Activated CD4-positive, alpha-beta T cell treated with anti-CD3 and anti-CD28 coated beads, Interleukin-2, amount 10 ng/mL, durations not matched to agents 24 days and 14 days (primary cell): ENCODE measurements at regions of chr14 and their contacts with region 1.

Region 1: GRCh38 chr14:65102441-65103149 is at the start of gene MAX:
- DNase-seq: peak; percentile 99
- H3K4me3 Mint-ChIP-seq: peak within 1 kb of the TSS; percentile 91
- H3K27ac Mint-ChIP-seq: peak within 1 kb of the TSS; percentile 94
- H3K4me1 Mint-ChIP-seq: peaks cover 36% of the 10 kb centered on the region
- H3K27me3 Mint-ChIP-seq: peaks cover 7% of the 10 kb centered on the region
- total RNA-seq, gene MAX: 122 and 128 TPM in 2 replicates

Region 2: DNA sequence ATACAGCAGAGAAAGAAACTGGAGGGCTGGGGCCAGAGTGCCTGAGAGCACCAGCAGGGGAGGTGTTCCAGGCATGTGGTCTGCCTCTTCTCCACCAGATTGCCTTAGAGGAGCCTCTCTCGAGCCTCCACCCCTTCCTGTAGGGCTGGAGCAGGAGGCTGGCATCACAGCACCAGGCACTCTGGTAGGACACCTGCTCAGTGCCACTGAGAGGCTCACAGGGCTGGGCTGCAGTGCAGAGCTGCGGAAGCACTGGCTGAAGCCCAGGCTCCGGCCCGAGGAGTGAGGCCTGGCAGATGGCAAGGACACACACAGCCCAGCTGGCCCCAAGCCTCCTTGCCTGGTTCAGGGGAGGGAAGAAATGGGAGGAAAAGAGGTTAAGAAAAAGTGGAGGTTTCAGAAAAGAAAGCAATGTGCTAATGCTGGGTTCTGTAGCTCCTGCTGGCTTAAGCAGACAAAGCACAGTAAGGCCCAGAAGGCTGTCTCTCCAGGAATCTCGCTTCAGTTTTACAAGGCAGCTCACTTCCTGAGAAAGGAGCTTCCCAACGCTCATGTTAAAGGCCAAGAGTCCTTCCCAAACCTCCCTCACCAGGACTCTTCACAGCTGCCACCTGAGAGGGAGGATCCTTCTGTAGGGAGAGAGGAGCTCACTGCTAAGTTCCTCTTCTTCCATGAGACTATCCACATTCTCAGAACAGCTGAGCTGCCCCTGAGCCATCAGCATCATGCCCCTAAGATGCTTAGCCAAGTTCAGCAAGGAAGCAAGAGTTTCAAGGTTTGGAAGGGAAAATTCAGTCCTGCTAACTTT is 246.7 kb before region 1 on chr14:
- intact Hi-C with region 1: no loop called
- DNase-seq: no peak
- H3K4me3 Mint-ChIP-seq: no peak overlapping the region
- H3K27ac Mint-ChIP-seq: no peak overlapping the region
- H3K4me1 Mint-ChIP-seq: no peaks in the 10 kb centered on the region
- H3K27me3 Mint-ChIP-seq: peaks cover 29% of the 10 kb centered on the region

Region 3: DNA sequence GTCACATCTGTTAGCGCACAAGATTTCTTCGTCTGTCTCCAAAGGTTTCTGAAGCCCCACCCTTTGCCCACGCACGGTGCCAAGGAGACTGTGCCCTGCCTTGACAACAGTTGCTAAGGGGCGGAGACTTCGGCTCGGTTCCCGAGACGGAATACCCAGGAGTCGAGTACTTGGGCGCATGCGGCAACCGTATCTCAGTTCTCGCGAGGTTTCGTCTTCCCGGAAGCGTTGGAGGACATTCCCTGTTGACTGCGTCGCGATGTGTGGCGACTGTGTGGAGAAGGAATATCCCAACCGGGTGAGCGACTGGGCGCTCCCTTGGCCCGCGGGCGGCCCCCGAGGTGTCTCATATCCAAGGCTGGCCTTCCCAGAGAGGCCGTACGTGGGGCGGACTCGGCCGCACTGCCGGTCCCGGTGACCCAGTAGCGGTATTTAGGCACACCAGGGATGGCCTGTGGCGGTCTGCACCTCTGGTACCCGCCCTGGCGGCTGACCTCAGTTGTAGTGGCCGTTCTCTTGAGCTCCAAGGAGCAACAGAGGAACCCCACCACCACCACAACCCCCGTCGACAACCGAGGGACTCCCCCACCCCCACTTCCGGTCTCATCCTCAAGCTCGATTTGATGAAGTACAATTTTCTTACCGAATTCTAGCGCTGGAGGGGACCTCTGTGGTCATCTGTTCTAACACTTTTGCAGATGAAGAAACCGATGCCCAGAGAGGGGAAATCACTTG is 188.2 kb before region 1 on chr14 and contains the start of gene CHURC1:
- intact Hi-C with region 1: loop called (anchors 1 kb)
- DNase-seq: peak; percentile 99
- H3K4me3 Mint-ChIP-seq: peak within 1 kb of the TSS; percentile 85
- H3K27ac Mint-ChIP-seq: peak within 1 kb of the TSS; percentile 95
- H3K4me1 Mint-ChIP-seq: peaks cover 44% of the 10 kb centered on the region
- H3K27me3 Mint-ChIP-seq: peaks cover 14% of the 10 kb centered on the region
- total RNA-seq, gene CHURC1: 53.5 and 54.9 TPM in 2 replicates

Region 4: GRCh38 chr14:65003394-65003793 is 99.2 kb before region 1 on chr14:
- intact Hi-C with region 1: loop called (anchors 5 kb)
- DNase-seq: no peak
- H3K4me3 Mint-ChIP-seq: peak overlapping the region; percentile 7
- H3K27ac Mint-ChIP-seq: peak overlapping the region; percentile 70
- H3K4me1 Mint-ChIP-seq: peaks cover 35% of the 10 kb centered on the region
- H3K27me3 Mint-ChIP-seq: no peaks in the 10 kb centered on the region